Adrenal gland (tissue), 19 donors: ENCODE measurements at regions of chr9 and their contacts with region 1.

Region 1: DNA sequence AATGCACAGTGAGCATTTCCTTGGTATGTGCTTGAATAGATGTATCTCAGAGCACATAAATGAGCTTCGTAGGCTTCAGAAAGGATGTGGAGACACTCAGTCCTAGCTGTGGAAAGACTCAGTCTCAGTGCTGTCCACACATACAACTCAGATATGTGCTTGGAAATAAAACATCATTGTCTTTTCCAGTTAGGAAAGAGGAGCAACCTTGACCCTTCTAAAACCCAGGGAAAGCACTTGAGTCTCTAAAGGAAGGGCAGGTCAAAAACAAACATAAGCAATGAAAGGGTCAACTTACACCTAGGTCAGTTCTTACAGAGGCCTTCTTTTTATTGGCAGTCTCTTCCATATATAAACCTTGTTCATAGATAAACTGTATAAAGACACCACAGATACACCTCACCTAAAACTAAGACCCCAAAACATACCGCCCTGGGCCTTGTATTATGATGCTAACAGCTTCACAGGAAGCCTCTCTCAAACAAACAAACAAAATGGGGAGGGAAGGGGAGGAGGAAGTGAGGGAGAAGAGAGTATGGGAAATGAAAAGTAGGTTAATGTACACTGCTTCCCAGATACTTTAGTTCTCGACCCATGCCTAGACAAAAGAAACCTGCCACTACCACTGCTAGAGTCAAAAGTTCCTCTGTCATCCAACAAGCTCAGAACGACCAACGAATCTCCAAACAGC is 114.4 kb downstream of the UBAP2 start:
- DNase-seq: no peak
- H3K4me3 ChIP-seq: no peak overlapping the region
- H3K27ac ChIP-seq: no peak overlapping the region
- H3K4me1 ChIP-seq: peaks cover 11 to 14% of the 10 kb centered on the region in 2 donors
- H3K27me3 ChIP-seq: no peaks in the 10 kb centered on the region
- CTCF ChIP-seq: no peak
- POLR2A ChIP-seq: no peak

Region 2: GRCh38 chr9:33919276-33919897 is 14.9 kb before region 1 on chr9:
- intact Hi-C with region 1: loop called in 1 of 2 experiments (anchors 2 kb)
- DNase-seq: no peak
- H3K4me3 ChIP-seq: no peak overlapping the region
- H3K27ac ChIP-seq: no peak overlapping the region
- H3K4me1 ChIP-seq: no peaks in the 10 kb centered on the region
- H3K27me3 ChIP-seq: no peaks in the 10 kb centered on the region
- CTCF ChIP-seq: no peak
- POLR2A ChIP-seq: no peak